ENCODE measurements at regions of chr3 and their contacts with region 1.

Region 1: DNA sequence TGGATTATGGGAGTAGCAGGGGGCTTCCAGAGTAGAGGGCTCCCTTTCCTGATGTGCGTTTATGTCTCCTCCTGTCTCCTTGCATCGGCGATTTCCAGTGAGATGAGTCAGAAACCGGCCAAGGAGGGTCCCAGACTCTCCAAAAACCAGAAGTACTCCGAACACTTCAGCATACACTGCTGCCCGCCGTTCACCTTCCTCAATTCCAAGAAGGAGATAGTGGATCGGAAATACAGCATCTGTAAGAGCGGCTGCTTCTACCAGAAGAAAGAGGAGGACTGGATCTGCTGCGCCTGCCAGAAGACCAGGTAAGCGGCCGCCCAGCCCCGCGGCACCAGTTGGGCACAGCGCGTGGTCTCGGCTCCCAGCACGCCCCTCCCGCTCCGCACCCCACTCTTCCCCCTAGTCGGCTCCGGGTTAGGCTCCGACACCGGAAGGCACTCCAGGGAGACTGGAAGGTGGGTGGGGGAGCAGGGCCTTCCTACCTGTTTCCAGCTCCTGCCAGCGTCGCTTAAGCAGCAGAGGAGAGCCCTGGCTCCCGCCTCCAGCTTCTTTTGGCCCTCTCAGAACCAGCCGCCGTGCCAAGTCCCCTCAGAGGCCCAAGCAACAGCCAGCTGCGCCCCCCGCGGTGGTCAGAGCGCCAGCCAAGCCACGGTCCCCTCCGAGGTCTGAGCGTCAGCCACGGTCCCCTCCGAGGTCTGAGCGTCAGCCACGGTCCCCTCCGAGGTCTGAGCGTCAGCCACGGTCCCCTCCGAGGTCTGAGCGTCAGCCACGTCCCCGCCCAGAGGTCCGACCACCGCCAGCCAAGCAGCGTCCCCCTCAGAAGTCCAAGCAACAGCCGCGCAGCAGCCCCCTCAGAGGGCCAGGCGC is 34.7 kb downstream of the MOBP start:
- DNase-seq: no peak
- H3K4me3 ChIP-seq: peak overlapping the region; percentile 49 to 64 (median 63)
- H3K27ac ChIP-seq: peak overlapping the region; percentile 46
- H3K4me1 ChIP-seq: peaks cover 23% of the 10 kb centered on the region
- H3K27me3 ChIP-seq: peaks cover 0 to 6% of the 10 kb centered on the region in 2 experiments
- CTCF ChIP-seq: no peak
- POLR2A ChIP-seq: no peak

Region 2: GRCh38 chr3:39414421-39414907 is 87.7 kb before region 1 on chr3:
- CTCF ChIA-PET with region 1: interaction called, 56 read pairs
- POLR2A ChIA-PET with region 1: no interaction called
- dilution Hi-C with region 1: no loop called
- intact Hi-C with region 1: loop called (anchors 1 kb)
- DNase-seq: no peak
- H3K4me3 ChIP-seq: no peak overlapping the region
- H3K27ac ChIP-seq: no peak overlapping the region
- H3K4me1 ChIP-seq: peaks cover 5% of the 10 kb centered on the region
- H3K27me3 ChIP-seq: no peaks in the 10 kb centered on the region
- CTCF ChIP-seq: no peak
- POLR2A ChIP-seq: peak; percentile 85

Region 3: GRCh38 chr3:39447637-39448483 is 54.3 kb before region 1 on chr3:
- CTCF ChIA-PET with region 1: interaction called, 82 read pairs
- POLR2A ChIA-PET with region 1: no interaction called
- dilution Hi-C with region 1: no loop called
- intact Hi-C with region 1: loop called (anchors 1 kb)
- DNase-seq: peak; percentile 83
- H3K4me3 ChIP-seq: no peak overlapping the region
- H3K27ac ChIP-seq: no peak overlapping the region
- H3K4me1 ChIP-seq: no peaks in the 10 kb centered on the region
- H3K27me3 ChIP-seq: peaks cover 0 to 2% of the 10 kb centered on the region in 2 experiments
- CTCF ChIP-seq: peak; percentile 76 to 78
- POLR2A ChIP-seq: no peak

Region 4: DNA sequence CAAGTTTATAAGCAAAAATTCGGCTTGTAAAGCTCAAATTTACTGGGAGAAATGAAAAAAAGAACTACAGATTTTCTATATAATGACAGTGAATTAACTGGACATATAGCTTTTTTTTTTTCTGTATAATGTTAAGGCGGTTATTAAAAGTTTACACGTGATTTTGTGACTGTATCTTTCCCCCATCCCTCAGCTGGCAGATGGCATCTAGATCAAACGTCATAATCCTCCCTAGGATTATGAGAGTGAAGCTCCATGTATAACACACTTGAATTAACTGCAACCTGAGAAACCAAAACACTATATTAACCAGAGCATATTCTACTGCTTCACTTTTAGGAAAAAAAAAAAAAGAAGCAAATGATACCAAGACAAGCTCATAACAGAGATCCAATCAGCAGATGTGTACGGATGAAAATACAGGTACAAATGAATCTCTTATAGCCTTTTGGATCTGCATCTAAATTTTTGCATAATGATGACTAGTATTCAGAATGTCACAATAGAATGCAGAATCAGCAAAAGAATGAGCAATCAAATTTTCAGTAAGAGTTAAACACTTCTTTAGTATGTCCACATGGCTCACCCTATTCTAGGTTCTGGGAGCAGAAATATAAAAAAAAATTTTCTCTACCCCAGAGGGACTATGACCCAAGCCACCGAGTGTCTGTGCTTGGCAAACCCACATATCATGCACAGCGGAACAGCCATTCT is 22.3 kb before region 1 on chr3:
- CTCF ChIA-PET with region 1: interaction called, 11 read pairs
- POLR2A ChIA-PET with region 1: no interaction called
- dilution Hi-C with region 1: no loop called
- intact Hi-C with region 1: no loop called
- DNase-seq: no peak
- H3K4me3 ChIP-seq: no peak overlapping the region
- H3K27ac ChIP-seq: no peak overlapping the region
- H3K4me1 ChIP-seq: no peaks in the 10 kb centered on the region
- H3K27me3 ChIP-seq: peaks cover 0 to 8% of the 10 kb centered on the region in 2 experiments
- CTCF ChIP-seq: no peak
- POLR2A ChIP-seq: no peak

Region 5: DNA sequence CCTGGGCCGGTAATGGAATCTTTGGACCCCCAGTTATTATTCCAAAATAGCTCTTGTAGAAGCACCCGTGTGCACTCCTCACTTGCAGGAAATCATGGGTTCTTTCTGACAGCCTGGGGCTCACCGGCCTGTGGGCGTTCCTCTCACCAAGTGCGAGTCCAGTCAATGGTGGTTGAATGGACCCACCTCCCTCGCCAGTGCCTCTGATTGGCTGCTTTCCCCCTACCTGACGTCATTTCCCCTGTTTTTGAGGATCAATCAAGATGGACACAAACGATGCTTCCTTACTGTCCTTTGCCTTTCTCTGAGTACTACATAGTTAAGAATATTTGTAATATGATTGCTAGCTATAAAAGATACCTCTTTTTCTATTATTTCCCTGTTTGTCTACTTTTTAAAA is 16.7 kb before region 1 on chr3:
- CTCF ChIA-PET with region 1: interaction called, 18 read pairs
- POLR2A ChIA-PET with region 1: no interaction called
- dilution Hi-C with region 1: no loop called
- intact Hi-C with region 1: no loop called
- DNase-seq: no peak
- H3K4me3 ChIP-seq: no peak overlapping the region
- H3K27ac ChIP-seq: no peak overlapping the region
- H3K4me1 ChIP-seq: no peaks in the 10 kb centered on the region
- H3K27me3 ChIP-seq: peaks cover 0 to 7% of the 10 kb centered on the region in 2 experiments
- CTCF ChIP-seq: no peak
- POLR2A ChIP-seq: no peak

Region 6: GRCh38 chr3:39519103-39519502 is 16.9 kb after region 1 on chr3:
- CTCF ChIA-PET with region 1: interaction called, 24 read pairs
- POLR2A ChIA-PET with region 1: no interaction called
- dilution Hi-C with region 1: no loop called
- intact Hi-C with region 1: no loop called
- DNase-seq: no peak
- H3K4me3 ChIP-seq: no peak overlapping the region
- H3K27ac ChIP-seq: no peak overlapping the region
- H3K4me1 ChIP-seq: peaks cover 8% of the 10 kb centered on the region
- H3K27me3 ChIP-seq: no peaks in the 10 kb centered on the region
- CTCF ChIP-seq: no peak
- POLR2A ChIP-seq: no peak

Region 7: GRCh38 chr3:39531650-39532049 is 29.4 kb after region 1 on chr3:
- CTCF ChIA-PET with region 1: interaction called, 21 read pairs
- POLR2A ChIA-PET with region 1: no interaction called
- dilution Hi-C with region 1: no loop called
- intact Hi-C with region 1: loop called (anchors 2 kb)
- DNase-seq: peak; percentile 98
- H3K4me3 ChIP-seq: no peak overlapping the region
- H3K27ac ChIP-seq: peak overlapping the region; percentile 84
- H3K4me1 ChIP-seq: peaks cover 27% of the 10 kb centered on the region
- H3K27me3 ChIP-seq: no peaks in the 10 kb centered on the region
- CTCF ChIP-seq: no peak
- POLR2A ChIP-seq: peak; percentile 43

Region 8: GRCh38 chr3:39937874-39938273 is 435.7 kb after region 1 on chr3:
- CTCF ChIA-PET with region 1: no interaction called
- POLR2A ChIA-PET with region 1: no interaction called
- dilution Hi-C with region 1: no loop called
- intact Hi-C with region 1: no loop called
- DNase-seq: peak; percentile 20
- H3K4me3 ChIP-seq: no peak overlapping the region
- H3K27ac ChIP-seq: no peak overlapping the region
- H3K4me1 ChIP-seq: peaks cover 25% of the 10 kb centered on the region
- H3K27me3 ChIP-seq: no peaks in the 10 kb centered on the region
- CTCF ChIP-seq: no peak
- POLR2A ChIP-seq: no peak